Transverse colon (tissue), 4 donors: ENCODE measurements at regions of chr18 and their contacts with region 1.

Region 1: GRCh38 chr18:55897091-55897689 is 309.2 kb upstream of the TCF4 start:
- DNase-seq: no peak
- H3K4me3 ChIP-seq: no peak overlapping the region
- H3K27ac ChIP-seq: no peak overlapping the region
- H3K4me1 ChIP-seq: no peaks in the 10 kb centered on the region
- H3K27me3 ChIP-seq: no peaks in the 10 kb centered on the region
- CTCF ChIP-seq: no peak
- EP300 ChIP-seq: no peak
- POLR2A ChIP-seq: no peak

Region 2: DNA sequence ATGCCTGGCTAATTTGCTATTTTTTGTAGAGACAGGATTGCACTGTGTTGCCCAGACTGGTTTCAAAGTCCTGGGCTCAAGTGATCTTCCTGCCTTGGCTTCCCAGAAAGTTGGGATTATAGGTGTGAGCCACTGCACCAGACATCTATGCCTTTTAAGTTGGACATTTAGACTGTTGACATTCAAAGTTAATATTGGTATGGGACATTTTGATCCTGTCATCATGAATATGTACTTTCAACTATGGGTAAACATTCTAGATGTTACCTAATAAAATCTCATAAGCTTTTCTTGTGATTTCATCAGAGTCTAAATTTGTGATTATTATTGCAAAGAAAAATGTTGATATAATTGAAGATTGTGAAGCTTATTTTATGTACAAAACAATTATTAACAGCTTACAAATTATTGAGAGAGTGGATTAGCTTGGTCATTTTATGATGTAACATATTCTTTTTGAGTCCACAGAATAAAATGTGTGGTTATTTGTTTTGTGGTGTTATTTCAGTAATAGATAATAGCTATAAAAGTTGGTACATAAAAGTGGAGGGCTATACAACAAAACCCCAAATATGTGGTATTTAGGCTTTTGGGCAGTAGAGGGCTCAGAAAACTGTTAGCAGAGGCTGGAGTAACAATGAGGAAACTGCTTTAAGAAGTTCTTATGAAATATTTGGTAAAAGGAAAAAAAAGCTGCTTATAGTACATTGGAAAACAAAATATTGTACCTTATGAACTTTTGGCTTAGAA is 1580.9 kb before region 1 on chr18:
- in situ Hi-C with region 1: no loop called
- intact Hi-C with region 1: loop called (anchors 5 kb)
- DNase-seq: no peak
- H3K4me3 ChIP-seq: no peak overlapping the region
- H3K27ac ChIP-seq: no peak overlapping the region
- H3K4me1 ChIP-seq: no peaks in the 10 kb centered on the region
- H3K27me3 ChIP-seq: no peaks in the 10 kb centered on the region
- CTCF ChIP-seq: no peak
- EP300 ChIP-seq: no peak
- POLR2A ChIP-seq: no peak

Region 3: GRCh38 chr18:55775972-55776371 is 121.2 kb before region 1 on chr18:
- in situ Hi-C with region 1: no loop called
- intact Hi-C with region 1: no loop called
- DNase-seq: no peak
- H3K4me3 ChIP-seq: no peak overlapping the region
- H3K27ac ChIP-seq: no peak overlapping the region
- H3K4me1 ChIP-seq: peaks cover 0 to 6% (median 0%) of the 10 kb centered on the region in 4 donors
- H3K27me3 ChIP-seq: peaks cover 12% of the 10 kb centered on the region
- CTCF ChIP-seq: no peak
- EP300 ChIP-seq: no peak
- POLR2A ChIP-seq: no peak

Region 4: GRCh38 chr18:55821219-55821618 is 76.0 kb before region 1 on chr18:
- in situ Hi-C with region 1: no loop called
- intact Hi-C with region 1: no loop called
- DNase-seq: no peak
- H3K4me3 ChIP-seq: no peak overlapping the region
- H3K27ac ChIP-seq: peak overlapping the region in 1 of 4 donors; percentile 3
- H3K4me1 ChIP-seq: no peaks in the 10 kb centered on the region
- H3K27me3 ChIP-seq: no peaks in the 10 kb centered on the region
- CTCF ChIP-seq: no peak
- EP300 ChIP-seq: no peak
- POLR2A ChIP-seq: no peak

Region 5: DNA sequence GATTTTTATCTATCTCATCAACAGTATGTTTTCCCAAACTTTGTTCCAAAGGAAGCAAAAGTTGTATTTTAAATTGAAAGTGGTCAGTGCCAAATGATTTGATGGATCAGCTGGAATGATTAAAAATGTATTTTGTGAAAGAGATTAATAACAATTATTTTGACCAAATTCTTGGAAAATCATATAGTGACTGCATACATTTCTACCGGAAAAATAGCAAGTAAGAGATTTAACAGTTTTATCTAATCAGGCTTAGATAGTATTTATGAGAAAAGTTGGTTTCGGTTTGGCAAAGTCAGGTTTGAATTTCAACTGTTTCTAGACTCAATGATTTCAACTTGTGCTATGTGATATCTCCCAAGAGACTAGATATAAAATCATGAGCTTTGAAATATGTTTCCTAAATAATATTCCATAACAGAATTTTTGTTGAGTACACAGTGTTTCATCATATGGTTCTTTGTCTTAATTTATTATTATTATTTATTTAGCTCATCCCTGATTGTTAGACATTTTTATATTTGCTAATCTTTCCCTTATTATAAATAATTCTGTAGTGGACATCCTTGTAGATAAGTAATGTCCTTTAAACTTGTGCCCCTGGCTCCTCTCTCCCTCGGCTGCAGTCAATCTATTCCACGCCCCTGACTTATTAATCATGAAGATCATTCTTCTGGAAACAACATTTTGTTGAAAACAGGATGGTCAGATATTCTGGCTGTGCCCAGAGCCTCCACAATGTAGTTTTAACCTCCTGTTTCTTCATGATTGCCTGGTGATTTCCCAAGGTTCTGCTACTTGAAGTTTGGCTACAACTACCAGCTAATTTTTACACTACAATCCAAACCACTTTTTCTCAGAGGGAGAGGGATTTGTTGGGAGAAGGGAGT is 211.5 kb after region 1 on chr18:
- in situ Hi-C with region 1: no loop called
- intact Hi-C with region 1: no loop called
- DNase-seq: no peak
- H3K4me3 ChIP-seq: no peak overlapping the region
- H3K27ac ChIP-seq: no peak overlapping the region
- H3K4me1 ChIP-seq: no peaks in the 10 kb centered on the region
- H3K27me3 ChIP-seq: no peaks in the 10 kb centered on the region
- CTCF ChIP-seq: no peak
- EP300 ChIP-seq: no peak
- POLR2A ChIP-seq: no peak